ENCODE measurements at regions of chr17 and their contacts with region 1.

Region 1: DNA sequence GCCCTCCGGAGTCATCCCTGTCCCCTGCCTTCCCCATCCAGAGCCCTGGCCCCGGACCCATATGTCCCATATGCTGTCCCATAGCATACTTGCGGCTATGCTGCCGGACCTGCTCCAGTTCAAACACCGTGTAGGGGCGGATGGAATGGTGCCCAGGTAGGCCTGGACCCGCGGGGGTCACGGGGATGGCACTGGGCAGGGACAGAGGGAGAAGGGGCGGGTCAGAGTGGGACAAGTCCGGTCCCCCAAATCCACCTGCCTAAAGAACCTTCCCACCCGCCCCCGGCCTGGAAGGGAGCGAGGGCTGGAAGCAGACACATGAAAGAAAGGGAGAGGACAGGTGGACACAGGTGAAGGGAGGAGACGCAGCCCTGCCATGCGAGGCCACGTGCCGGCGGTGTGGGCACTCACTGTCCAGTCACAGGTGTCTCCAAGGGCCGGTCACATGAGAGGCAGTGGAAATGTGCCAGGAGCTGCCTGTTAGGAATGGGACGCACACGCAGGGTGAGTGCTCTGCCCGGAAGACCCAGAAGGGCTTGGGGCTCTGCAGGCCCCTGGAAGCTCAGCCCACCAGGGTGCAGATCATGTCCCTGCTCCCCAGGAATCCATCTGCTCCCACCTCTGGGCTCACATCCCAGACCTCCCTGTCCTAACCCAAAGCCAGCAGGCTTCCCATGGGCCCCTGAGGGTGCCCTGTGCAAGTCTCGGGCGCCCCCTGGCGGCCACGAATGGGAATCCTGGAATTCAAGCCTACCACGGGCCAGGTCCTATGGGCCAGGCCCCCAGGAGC is 14.0 kb downstream of the UBALD2 start:
- DNase-seq: peak; percentile 90
- CTCF ChIP-seq: peak; percentile 92

Region 2: DNA sequence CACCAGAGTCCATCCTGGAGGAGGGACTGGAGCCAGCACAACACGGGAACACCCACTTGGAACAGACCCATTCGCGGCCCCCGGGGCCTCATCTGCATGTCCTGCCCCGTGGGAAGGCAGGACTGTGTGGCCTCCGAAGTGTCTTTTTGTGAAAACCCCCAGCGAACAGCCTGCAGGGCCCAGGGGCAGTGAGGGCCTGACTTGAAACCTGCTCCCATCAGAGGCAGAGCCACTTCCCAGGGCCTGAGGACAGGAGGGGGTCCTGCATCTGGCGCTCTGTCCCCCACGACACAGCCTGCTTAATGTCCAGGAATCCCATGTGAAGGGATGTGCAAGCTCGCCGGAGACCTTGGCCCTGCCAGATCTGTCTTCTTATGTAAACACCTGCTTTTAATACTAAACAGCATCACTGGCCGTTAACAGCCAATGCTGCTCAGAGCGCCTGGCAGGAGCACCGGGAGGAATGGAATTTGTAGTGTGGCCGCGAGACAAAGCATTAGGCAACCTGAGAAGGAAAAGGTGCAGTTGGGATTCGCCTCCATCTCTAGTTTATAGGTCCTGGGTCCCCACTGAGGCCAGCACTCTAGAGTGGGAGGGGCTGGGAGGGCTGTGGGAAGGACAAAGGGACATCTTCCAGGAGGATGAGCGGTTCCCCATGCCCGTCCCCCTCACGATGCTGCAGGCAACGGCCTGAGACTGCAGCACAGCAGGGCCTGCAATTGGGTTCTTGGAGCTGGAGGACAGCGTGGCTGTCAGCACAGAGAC is 242.5 kb before region 1 on chr17:
- CTCF ChIA-PET with region 1: interaction called, 10 read pairs
- POLR2A ChIA-PET with region 1: no interaction called
- DNase-seq: no peak
- CTCF ChIP-seq: no peak

Region 3: DNA sequence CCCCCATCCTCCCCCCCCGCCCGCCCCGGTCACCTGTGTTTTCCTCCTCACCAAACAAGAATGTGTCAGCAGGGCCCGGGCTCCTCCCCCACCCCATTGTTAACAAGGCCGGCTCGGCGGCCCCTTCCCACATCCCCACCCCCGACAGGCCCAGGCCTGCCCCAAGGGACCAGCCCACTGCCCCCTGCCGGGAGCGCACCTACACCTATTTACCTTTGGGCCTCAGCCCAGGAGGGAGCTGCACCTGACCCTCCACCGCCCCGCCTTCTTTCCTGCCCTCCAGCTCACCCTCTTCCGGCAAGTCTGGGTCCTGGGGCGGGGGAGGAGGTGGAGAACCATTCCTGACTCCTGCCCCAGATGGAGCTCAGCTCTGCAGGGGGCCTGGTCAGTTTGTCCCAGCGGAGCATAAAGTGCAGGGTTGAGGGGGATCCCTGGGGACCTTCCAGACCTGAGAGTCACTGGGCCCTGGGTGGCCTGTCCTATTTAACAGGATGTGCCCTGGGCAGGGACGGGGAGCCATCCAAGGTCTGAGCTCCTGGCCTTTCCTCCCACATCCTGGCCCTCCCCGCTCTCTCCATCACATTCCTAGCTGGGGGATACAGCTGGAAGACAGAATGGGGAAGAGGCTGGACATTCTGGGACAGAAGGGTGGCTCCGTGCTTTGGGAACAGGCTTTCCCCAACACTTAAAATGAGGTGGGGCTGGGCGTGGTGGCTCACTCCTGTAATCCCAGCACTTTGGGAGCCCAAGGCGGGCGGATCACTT is 146.4 kb before region 1 on chr17:
- CTCF ChIA-PET with region 1: interaction called, 337 read pairs
- POLR2A ChIA-PET with region 1: no interaction called
- DNase-seq: no peak
- CTCF ChIP-seq: no peak

Region 4: GRCh38 chr17:76204277-76204676 is 74.9 kb before region 1 on chr17:
- CTCF ChIA-PET with region 1: interaction called, 10 read pairs
- POLR2A ChIA-PET with region 1: no interaction called
- DNase-seq: no peak
- CTCF ChIP-seq: no peak

Region 5: DNA sequence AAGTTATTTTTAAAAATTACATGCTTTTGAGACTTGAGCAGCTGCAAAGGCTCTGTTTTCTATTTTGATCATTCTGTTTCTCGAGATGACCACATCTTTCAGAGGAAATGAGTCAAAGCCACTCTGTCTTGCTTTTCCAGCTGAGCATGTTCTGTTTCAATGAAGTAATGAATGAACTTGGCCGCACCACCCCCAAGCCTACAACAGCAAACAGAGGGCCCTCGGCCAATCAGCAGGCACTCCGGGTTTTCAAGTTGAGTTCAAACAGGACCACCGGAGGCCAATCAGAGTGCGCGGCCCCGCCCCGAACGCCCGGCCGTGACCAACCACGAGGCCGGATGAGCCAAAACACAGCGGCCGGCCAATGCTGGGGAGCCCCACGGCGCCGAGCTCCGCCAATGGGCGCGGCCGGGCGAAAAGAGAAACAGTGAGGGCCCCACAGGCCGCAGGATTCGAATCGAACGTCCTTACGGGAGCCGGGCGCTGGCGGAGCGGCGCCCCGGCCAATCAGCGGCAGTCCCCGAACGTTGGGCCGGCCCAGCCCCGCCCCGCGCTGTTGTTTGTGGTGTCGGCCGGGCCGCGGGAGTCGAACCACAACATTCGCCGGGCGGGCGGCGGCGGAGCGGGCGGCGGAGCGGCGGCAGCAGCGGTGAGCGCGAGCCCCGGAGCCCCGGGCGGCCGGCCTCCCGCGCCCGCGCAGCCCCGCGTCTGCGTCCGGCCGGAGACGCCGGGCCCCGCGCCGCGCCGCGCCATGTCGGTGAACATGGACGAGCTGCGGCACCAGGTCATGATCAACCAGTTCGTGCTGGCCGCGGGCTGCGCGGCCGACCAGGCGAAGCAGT is 14.2 kb before region 1 on chr17 and contains the start of gene UBALD2:
- CTCF ChIA-PET with region 1: interaction called, 39 read pairs
- POLR2A ChIA-PET with region 1: interaction called, 36 read pairs
- DNase-seq: peak; percentile 93
- CTCF ChIP-seq: no peak